ENCODE measurements at regions of chr6 and their contacts with region 1.

Region 1: DNA sequence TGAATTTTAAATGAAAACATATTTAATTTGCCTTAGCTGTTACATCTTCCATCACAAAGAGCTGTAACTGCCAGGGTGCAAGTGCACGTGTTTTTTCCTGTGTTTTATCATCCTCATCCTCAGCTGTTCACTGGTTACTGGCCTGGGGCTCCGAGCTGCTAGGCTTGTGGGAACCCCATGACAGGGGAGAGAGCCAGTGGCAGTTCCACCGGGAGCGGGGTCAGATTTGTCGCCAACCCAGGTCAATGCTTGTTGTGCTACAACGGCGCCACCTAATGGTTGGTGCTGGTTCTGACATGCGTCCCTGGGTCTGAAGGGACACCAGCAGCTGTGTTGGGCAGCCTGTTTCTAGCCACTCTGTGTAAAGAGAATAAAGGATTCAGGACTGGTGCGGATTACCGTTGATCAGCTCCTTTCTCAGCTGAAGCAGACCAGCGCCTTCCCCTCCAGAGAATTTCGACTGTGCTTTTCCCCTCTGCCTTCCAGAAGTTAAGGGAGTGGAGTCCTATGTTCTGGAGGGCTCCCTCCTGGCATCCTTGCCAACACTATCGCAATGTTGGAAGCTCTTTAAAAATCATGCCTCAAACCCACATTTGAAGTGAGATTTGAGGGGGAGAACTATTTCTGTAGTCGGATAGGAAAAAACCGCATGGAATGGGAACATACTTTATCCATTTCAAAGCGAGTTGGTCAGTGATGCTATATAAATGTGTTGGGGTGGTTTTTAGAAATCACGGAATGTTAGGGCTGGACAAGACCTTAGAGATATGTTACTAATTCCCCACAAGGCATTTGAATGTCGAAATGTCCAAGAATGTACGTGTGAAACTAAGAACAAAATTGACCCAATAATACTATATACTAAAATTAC is 32.1 kb downstream of the SUMO4 start:
- DNase-seq: peak; percentile 89
- CTCF ChIP-seq: peak; percentile 94

Region 2: GRCh38 chr6:148578245-148578732 is 853.9 kb before region 1 on chr6:
- in situ Hi-C with region 1: loop called (anchors 10 kb)
- DNase-seq: peak; percentile 73
- CTCF ChIP-seq: peak; percentile 98

Region 3: DNA sequence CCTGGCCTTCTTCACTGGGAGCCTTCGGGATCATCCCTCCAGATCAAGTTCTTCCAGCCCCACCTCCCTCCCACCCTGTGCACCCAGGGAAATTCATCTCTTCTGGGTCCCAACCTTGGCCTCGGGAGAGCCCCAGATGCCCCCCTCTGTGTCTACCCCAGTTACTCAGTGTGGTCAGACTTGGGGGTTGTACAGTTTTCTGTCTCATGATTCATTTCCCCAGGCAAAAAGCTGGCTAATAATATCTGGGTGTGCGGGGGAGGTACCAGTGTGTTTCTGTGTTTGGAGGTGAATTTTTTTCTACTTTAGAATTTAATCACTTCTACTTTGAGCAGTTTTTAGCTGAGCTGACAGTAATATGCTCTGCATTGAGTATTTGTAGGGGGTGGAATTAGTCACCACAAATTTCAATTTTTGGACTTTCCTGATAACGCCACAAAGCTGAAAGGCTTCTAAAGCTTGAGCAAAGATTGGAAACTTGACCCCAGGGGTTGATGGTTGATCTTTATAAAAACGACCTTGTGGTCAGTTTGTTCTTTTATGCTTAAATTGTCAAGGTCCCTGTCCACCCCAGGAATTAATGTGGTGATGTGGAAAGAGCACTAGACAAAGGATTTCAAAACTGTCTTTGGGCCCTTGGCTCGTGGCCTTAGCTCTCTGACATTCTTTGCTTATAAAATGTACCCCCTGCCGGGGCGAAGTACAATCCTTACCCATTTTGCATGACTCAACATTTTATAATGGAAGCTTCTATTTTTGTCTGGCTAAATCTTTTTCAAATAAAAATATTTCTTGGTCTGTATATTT is 399.3 kb before region 1 on chr6:
- in situ Hi-C with region 1: loop called (anchors 10 kb)
- DNase-seq: peak; percentile 82
- CTCF ChIP-seq: no peak

Region 4: GRCh38 chr6:149079911-149080481 is 352.1 kb before region 1 on chr6:
- in situ Hi-C with region 1: loop called (anchors 10 kb)
- DNase-seq: no peak
- CTCF ChIP-seq: no peak